ENCODE measurements at regions of chr1 and their contacts with region 1.

Region 1: GRCh38 chr1:171210355-171210754 is 25.3 kb downstream of the FMO2 start:
- DNase-seq: peak; percentile 49 to 57
- H3K4me3 ChIP-seq: no peak overlapping the region
- H3K4me3 Mint-ChIP-seq: no peak overlapping the region
- H3K27ac Mint-ChIP-seq: no peak overlapping the region
- H3K4me1 ChIP-seq: peaks cover 27% of the 10 kb centered on the region
- H3K4me1 Mint-ChIP-seq: peaks cover 11% of the 10 kb centered on the region
- H3K27me3 ChIP-seq: no peaks in the 10 kb centered on the region
- H3K27me3 Mint-ChIP-seq: no peaks in the 10 kb centered on the region
- CTCF ChIP-seq: no peak

Region 2: DNA sequence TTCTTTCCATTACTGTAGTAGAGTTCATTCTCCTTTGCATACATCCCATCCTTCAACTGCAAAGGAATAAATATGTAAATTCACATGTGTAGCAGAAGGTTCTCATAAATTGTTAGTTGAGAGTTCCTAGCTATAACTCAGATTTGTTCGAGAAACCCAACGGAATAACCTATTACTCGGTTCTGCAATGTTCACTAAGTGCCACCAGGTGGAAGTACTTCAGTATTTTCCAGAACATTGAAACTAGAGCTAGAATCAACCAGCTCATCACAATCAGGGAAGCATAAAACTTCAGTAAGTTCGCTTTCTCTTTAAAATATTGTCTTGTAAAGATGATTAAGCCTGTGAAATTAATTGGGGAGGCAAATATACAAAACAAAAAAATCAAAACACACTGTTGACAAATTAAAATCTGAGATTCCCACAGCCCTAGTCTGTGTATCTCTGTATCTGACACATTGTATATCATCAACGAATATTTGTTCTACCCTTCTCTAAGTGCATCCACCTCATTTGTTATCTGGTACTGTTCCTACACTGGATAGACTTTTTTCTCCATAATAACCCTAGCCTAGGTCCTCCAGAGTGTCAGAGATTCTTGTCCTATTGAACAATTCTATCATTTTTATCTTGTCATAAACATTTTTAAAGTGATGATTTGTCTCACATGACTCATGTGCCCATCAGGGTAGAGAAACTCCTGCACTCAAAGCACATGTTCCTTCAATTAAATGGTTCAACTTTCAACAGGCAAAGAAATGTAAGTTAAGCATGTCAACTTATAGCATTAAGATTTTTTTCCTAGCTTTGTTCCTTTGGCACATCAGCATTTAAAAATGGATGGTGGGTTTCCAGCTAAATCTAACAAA is 243.1 kb before region 1 on chr1:
- CTCF ChIA-PET with region 1: interaction called, 5 read pairs
- POLR2A ChIA-PET with region 1: no interaction called
- intact Hi-C with region 1: loop called (anchors 5 kb)
- DNase-seq: peak in 1 of 2 experiments; percentile 25
- H3K4me3 ChIP-seq: no peak overlapping the region
- H3K4me3 Mint-ChIP-seq: no peak overlapping the region
- H3K27ac Mint-ChIP-seq: no peak overlapping the region
- H3K4me1 ChIP-seq: no peaks in the 10 kb centered on the region
- H3K4me1 Mint-ChIP-seq: no peaks in the 10 kb centered on the region
- H3K27me3 ChIP-seq: no peaks in the 10 kb centered on the region
- H3K27me3 Mint-ChIP-seq: no peaks in the 10 kb centered on the region
- CTCF ChIP-seq: peak; percentile 60 to 66

Region 3: DNA sequence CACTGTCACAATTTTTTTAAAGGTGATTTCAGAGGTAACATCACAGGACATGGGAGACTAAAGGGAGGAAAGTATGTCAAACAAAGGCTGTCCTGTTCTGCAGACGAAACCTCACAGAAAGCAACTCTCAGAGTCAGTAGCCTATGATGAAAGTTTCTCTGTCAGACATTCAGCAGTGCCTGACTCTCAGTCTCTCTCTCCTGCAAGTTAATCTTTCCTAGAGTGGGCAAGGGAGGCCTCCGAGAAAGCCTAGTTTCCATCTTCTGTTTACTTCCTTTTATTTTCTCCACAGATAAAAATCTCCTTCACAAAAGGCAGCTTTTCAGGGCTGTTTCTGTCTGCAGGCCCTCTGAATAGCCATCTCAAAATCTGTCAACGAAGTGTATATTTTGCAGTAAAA is 50.1 kb before region 1 on chr1:
- CTCF ChIA-PET with region 1: no interaction called
- POLR2A ChIA-PET with region 1: no interaction called
- intact Hi-C with region 1: loop called (anchors 2 kb)
- DNase-seq: peak; percentile 54 to 56
- H3K4me3 ChIP-seq: no peak overlapping the region
- H3K4me3 Mint-ChIP-seq: peak overlapping the region; percentile 54
- H3K27ac Mint-ChIP-seq: peak overlapping the region; percentile 88
- H3K4me1 ChIP-seq: peaks cover 35% of the 10 kb centered on the region
- H3K4me1 Mint-ChIP-seq: peaks cover 29% of the 10 kb centered on the region
- H3K27me3 ChIP-seq: no peaks in the 10 kb centered on the region
- H3K27me3 Mint-ChIP-seq: no peaks in the 10 kb centered on the region
- CTCF ChIP-seq: no peak

Region 4: GRCh38 chr1:171434717-171435346 is 224.5 kb after region 1 on chr1:
- CTCF ChIA-PET with region 1: no interaction called
- POLR2A ChIA-PET with region 1: no interaction called
- intact Hi-C with region 1: no loop called
- DNase-seq: no peak
- H3K4me3 ChIP-seq: no peak overlapping the region
- H3K4me3 Mint-ChIP-seq: no peak overlapping the region
- H3K27ac Mint-ChIP-seq: no peak overlapping the region
- H3K4me1 ChIP-seq: no peaks in the 10 kb centered on the region
- H3K4me1 Mint-ChIP-seq: peaks cover 16% of the 10 kb centered on the region
- H3K27me3 ChIP-seq: no peaks in the 10 kb centered on the region
- H3K27me3 Mint-ChIP-seq: no peaks in the 10 kb centered on the region
- CTCF ChIP-seq: no peak